ENCODE measurements at regions of chr2 and their contacts with region 1.

Region 1: GRCh38 chr2:54704688-54705605 is 18.5 kb upstream of the EML6 start:
- DNase-seq: no peak
- ATAC-seq: peak; percentile 51
- H3K4me3 Mint-ChIP-seq: no peak overlapping the region
- H3K27ac Mint-ChIP-seq: no peak overlapping the region
- H3K4me1 Mint-ChIP-seq: peaks cover 8% of the 10 kb centered on the region
- H3K27me3 Mint-ChIP-seq: peaks cover 8% of the 10 kb centered on the region
- CTCF ChIP-seq: no peak

Region 2: DNA sequence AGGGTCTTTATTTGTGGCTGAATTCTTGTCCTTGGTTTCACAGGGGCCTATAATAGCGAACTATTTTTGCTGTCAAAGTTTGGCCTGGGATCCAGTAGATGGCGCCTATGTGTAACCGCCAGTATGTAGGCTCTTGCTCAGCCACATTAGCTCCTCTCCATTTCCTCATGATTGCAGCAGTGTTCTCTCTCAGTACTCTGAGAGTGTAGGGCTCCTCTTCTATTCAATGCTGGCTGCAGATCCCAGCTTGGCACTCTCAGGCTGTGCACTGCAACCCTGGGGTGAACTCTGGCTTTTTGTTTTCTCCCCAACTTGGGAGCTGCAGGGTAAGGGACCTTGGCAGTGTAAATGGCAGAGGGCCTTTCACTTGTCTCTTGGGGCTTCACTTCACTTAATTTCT is 1282.0 kb before region 1 on chr2:
- CTCF ChIA-PET with region 1: no interaction called
- POLR2A ChIA-PET with region 1: no interaction called
- intact Hi-C with region 1: loop called (anchors 10 kb)
- DNase-seq: no peak
- ATAC-seq: no peak
- H3K4me3 Mint-ChIP-seq: no peak overlapping the region
- H3K27ac Mint-ChIP-seq: no peak overlapping the region
- H3K4me1 Mint-ChIP-seq: peaks cover 3% of the 10 kb centered on the region
- H3K27me3 Mint-ChIP-seq: no peaks in the 10 kb centered on the region
- CTCF ChIP-seq: no peak

Region 3: DNA sequence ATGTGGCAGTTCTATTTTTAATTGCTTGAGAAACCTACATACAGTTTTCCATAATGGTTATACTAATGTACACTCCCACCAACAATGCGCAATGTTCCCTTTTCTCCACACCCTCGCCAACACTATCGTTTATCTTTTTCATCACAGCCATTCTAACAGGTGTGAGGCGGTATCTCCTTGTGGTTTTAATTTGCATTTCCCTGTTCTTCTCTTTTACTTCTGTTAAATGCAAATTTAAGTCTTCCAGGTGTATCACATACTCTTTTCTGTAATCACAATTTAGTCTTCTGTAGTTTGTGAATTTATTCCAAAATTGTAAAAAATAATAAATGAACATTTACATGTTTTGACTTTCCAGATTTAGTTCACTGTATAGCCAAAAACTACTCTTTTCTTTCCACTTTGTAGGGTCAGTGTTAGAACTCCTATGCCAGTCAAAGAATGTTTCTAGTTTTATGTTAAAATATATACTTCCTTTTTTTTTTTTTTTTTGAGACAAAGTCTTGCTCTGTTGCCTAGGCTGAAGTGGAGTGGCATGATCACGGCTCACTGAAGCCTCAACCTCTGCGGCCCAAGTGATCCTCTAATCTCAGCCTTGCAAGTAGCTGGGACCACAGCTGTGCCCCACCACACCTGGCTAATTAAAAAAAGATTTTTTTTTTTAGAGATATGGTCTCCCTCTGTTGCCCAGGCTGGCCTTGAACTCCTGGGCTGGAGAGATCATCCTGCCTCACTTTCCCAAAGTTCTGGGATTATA is 604.9 kb before region 1 on chr2:
- CTCF ChIA-PET with region 1: interaction called, 69 read pairs
- POLR2A ChIA-PET with region 1: interaction called, 10 read pairs
- intact Hi-C with region 1: no loop called
- DNase-seq: peak; percentile 45
- ATAC-seq: peak; percentile 75
- H3K4me3 Mint-ChIP-seq: peak overlapping the region; percentile 52
- H3K27ac Mint-ChIP-seq: peak overlapping the region; percentile 91
- H3K4me1 Mint-ChIP-seq: peaks cover 81% of the 10 kb centered on the region
- H3K27me3 Mint-ChIP-seq: no peaks in the 10 kb centered on the region
- CTCF ChIP-seq: no peak

Region 4: GRCh38 chr2:54657664-54658083 is 47.3 kb before region 1 on chr2:
- CTCF ChIA-PET with region 1: interaction called, 109 read pairs
- POLR2A ChIA-PET with region 1: no interaction called
- intact Hi-C with region 1: loop called (anchors 1 kb)
- DNase-seq: no peak
- ATAC-seq: peak; percentile 73
- H3K4me3 Mint-ChIP-seq: no peak overlapping the region
- H3K27ac Mint-ChIP-seq: peak overlapping the region; percentile 46
- H3K4me1 Mint-ChIP-seq: no peaks in the 10 kb centered on the region
- H3K27me3 Mint-ChIP-seq: no peaks in the 10 kb centered on the region
- CTCF ChIP-seq: no peak

Region 5: GRCh38 chr2:54673501-54673998 is 31.4 kb before region 1 on chr2:
- CTCF ChIA-PET with region 1: interaction called, 11 read pairs
- POLR2A ChIA-PET with region 1: interaction called, 5 read pairs
- intact Hi-C with region 1: no loop called
- DNase-seq: no peak
- ATAC-seq: peak; percentile 56
- H3K4me3 Mint-ChIP-seq: peak overlapping the region; percentile 64
- H3K27ac Mint-ChIP-seq: peak overlapping the region; percentile 84
- H3K4me1 Mint-ChIP-seq: peaks cover 34% of the 10 kb centered on the region
- H3K27me3 Mint-ChIP-seq: no peaks in the 10 kb centered on the region
- CTCF ChIP-seq: no peak

Region 6: DNA sequence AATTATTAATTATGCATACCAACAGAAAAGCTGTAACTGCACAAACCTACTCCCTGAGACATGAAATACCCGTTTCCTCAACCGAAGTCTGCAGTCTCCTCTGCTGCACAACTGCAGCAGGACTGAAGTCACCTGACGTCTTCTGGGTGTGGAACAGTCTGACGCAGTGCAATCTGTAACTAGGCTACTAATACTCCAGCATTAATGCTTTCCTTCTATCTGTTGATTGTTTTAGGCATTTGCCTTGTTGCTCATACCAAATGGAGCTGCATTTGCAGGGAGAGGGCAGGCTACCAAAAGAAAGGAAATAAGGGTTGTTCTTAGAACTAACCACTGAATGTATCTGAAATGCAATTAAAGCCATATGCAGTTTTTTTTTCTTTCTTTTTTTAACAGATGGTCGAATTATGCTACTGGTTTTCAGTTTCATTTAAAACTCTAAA is 305.2 kb after region 1 on chr2:
- CTCF ChIA-PET with region 1: no interaction called
- POLR2A ChIA-PET with region 1: no interaction called
- intact Hi-C with region 1: loop called (anchors 5 kb)
- DNase-seq: no peak
- ATAC-seq: peak; percentile 96
- H3K4me3 Mint-ChIP-seq: peak overlapping the region; percentile 84
- H3K27ac Mint-ChIP-seq: peak overlapping the region; percentile 67
- H3K4me1 Mint-ChIP-seq: peaks cover 63% of the 10 kb centered on the region
- H3K27me3 Mint-ChIP-seq: no peaks in the 10 kb centered on the region
- CTCF ChIP-seq: no peak

Measured in activated B cell treated with CpG ODN at 0.5 μM for 24 hours (primary cell).